ENCODE measurements at regions of chr10 and their contacts with region 1.

Region 1: DNA sequence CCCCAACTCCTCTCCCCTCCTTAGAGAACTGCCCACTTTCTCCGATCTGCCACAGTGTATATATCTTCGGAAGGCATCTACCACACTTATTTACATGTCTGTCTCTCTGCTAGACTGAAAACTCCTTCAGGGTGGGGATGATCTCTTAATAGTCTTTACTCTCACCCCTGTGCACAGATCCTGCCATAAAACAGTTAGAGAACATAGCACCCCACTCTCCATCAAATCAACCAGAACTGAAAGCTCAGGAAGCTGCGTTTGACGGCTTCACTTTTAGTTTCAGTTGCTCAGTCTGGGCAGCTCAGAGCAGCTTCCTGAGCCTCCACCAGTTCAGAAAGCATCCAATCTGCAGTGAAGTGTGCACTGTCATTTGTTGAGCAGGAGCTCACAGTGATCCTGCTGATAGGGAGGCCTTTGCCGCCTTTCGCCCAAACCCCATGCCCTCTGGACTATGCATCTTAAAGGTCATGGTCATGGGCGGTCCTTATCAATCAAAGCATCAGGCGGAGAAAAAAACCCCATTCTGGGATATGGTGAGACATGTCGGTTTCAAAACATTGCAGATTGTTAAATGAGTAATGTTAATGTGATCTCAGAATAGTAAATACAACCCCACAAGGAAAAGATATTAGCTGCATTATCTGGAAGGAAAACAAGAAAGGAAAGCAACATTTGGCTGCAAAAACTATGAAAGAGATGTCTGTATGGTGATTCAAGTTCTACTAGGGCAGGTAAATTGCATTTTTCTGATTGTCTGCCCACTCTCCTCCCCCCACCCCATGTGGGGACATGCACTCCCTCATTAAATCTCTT is 167.1 kb upstream of the ADO start:
- DNase-seq: peak; percentile 57 to 87
- ATAC-seq: peak; percentile 71 to 89 (median 79)
- H3K4me3 ChIP-seq: peak overlapping the region; percentile 24
- H3K4me3 Mint-ChIP-seq: no peak overlapping the region
- H3K27ac ChIP-seq: peak overlapping the region; percentile 94
- H3K27ac Mint-ChIP-seq: no peak overlapping the region
- H3K4me1 ChIP-seq: peaks cover 56% of the 10 kb centered on the region
- H3K4me1 Mint-ChIP-seq: peaks cover 11 to 12% of the 10 kb centered on the region in 2 donors
- H3K27me3 ChIP-seq: no peaks in the 10 kb centered on the region
- H3K27me3 Mint-ChIP-seq: no peaks in the 10 kb centered on the region
- CTCF ChIP-seq: no peak

Region 2: DNA sequence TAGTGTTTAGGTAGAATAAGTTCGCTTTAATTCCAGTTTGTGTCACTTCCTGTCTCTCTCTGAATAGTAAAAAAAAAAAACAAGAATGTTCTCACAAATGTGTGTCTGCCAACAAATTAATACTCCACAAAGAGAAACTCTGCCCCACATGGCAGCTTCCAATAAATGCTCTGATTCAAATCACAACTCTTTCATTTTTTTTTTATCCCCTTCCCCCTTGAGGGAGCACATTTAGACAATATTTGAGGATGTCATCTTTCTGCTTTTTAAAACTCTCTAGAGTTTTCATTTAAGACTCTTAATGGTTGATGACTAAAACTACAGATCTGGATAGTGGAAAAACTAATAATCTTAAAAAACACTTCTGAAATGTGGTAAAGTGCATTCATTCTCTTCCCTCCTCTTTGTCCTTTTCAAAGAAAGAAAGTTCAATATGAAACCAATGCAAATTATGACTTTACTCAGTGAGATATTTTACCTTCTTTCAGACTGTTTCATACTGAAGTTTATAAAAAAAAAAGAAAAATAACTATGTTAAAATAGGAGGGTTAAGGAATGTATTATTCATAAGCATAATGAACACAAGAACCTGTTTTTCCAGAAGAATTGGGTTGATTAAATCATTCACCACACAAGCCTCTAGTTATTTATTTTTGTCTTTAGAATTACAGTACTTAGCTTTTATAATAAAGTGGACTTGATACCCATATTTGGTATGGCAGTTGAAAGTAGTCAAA is 693.6 kb before region 1 on chr10:
- intact Hi-C with region 1: loop called (anchors 5 kb)
- DNase-seq: peak in 1 of 2 donors; percentile 68
- ATAC-seq: peak; percentile 47 to 66 (median 57)
- H3K4me3 ChIP-seq: peak overlapping the region; percentile 30
- H3K4me3 Mint-ChIP-seq: peak overlapping the region; percentile 86
- H3K27ac ChIP-seq: peak overlapping the region; percentile 93
- H3K27ac Mint-ChIP-seq: peak overlapping the region; percentile 93 to 95
- H3K4me1 ChIP-seq: peaks cover 11% of the 10 kb centered on the region
- H3K4me1 Mint-ChIP-seq: peaks cover 48 to 53% of the 10 kb centered on the region in 2 donors
- H3K27me3 ChIP-seq: no peaks in the 10 kb centered on the region
- H3K27me3 Mint-ChIP-seq: no peaks in the 10 kb centered on the region
- CTCF ChIP-seq: peak; percentile 22

Region 3: DNA sequence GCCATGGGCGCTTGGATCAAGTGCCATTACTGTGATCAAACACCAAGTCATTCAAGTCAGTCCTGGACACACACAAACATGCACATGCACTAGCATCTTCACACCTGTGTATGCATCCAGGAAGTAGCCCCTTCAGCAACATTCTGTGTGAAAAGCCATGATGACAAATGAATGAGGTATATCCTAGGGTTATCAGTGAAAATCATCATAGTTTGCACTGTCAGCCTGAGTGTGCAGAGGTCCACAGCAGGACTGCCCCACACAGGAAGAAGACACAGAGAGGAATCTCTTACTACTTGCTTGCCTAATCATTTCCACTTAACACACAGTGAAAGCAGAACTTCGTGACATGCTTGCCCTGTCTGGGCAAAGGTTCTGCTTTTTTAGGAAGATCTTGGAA is 17.0 kb before region 1 on chr10:
- intact Hi-C with region 1: loop called (anchors 2 kb)
- DNase-seq: no peak
- ATAC-seq: peak; percentile 84 to 90 (median 86)
- H3K4me3 ChIP-seq: no peak overlapping the region
- H3K4me3 Mint-ChIP-seq: peak overlapping the region; percentile 52
- H3K27ac ChIP-seq: peak overlapping the region; percentile 18
- H3K27ac Mint-ChIP-seq: peak overlapping the region; percentile 58 to 79
- H3K4me1 ChIP-seq: peaks cover 31% of the 10 kb centered on the region
- H3K4me1 Mint-ChIP-seq: peaks cover 25 to 38% of the 10 kb centered on the region in 2 donors
- H3K27me3 ChIP-seq: no peaks in the 10 kb centered on the region
- H3K27me3 Mint-ChIP-seq: peaks cover 0 to 2% of the 10 kb centered on the region in 2 donors
- CTCF ChIP-seq: no peak

Region 4: GRCh38 chr10:62707810-62708209 is 70.4 kb after region 1 on chr10:
- intact Hi-C with region 1: no loop called
- DNase-seq: no peak
- ATAC-seq: no peak
- H3K4me3 ChIP-seq: no peak overlapping the region
- H3K4me3 Mint-ChIP-seq: no peak overlapping the region
- H3K27ac ChIP-seq: no peak overlapping the region
- H3K27ac Mint-ChIP-seq: no peak overlapping the region
- H3K4me1 ChIP-seq: no peaks in the 10 kb centered on the region
- H3K4me1 Mint-ChIP-seq: peaks cover 5 to 6% of the 10 kb centered on the region in 2 donors
- H3K27me3 ChIP-seq: no peaks in the 10 kb centered on the region
- H3K27me3 Mint-ChIP-seq: peaks cover 0 to 6% of the 10 kb centered on the region in 2 donors
- CTCF ChIP-seq: no peak

Region 5: GRCh38 chr10:62858364-62858763 is 220.9 kb after region 1 on chr10:
- intact Hi-C with region 1: loop called (anchors 5 kb)
- DNase-seq: no peak
- ATAC-seq: no peak
- H3K4me3 ChIP-seq: no peak overlapping the region
- H3K4me3 Mint-ChIP-seq: no peak overlapping the region
- H3K27ac ChIP-seq: no peak overlapping the region
- H3K27ac Mint-ChIP-seq: no peak overlapping the region
- H3K4me1 ChIP-seq: peaks cover 26% of the 10 kb centered on the region
- H3K4me1 Mint-ChIP-seq: peaks cover 47 to 48% of the 10 kb centered on the region in 2 donors
- H3K27me3 ChIP-seq: no peaks in the 10 kb centered on the region
- H3K27me3 Mint-ChIP-seq: peaks cover 0 to 8% of the 10 kb centered on the region in 2 donors
- CTCF ChIP-seq: no peak

Region 6: GRCh38 chr10:63083904-63084689 is 446.6 kb after region 1 on chr10:
- intact Hi-C with region 1: no loop called
- DNase-seq: peak; percentile 20 to 76
- ATAC-seq: peak; percentile 76 to 87 (median 77)
- H3K4me3 ChIP-seq: no peak overlapping the region
- H3K4me3 Mint-ChIP-seq: no peak overlapping the region
- H3K27ac ChIP-seq: no peak overlapping the region
- H3K27ac Mint-ChIP-seq: no peak overlapping the region
- H3K4me1 ChIP-seq: no peaks in the 10 kb centered on the region
- H3K4me1 Mint-ChIP-seq: no peaks in the 10 kb centered on the region
- H3K27me3 ChIP-seq: no peaks in the 10 kb centered on the region
- H3K27me3 Mint-ChIP-seq: peaks cover 14 to 32% of the 10 kb centered on the region in 2 donors
- CTCF ChIP-seq: peak; percentile 75

Region 7: DNA sequence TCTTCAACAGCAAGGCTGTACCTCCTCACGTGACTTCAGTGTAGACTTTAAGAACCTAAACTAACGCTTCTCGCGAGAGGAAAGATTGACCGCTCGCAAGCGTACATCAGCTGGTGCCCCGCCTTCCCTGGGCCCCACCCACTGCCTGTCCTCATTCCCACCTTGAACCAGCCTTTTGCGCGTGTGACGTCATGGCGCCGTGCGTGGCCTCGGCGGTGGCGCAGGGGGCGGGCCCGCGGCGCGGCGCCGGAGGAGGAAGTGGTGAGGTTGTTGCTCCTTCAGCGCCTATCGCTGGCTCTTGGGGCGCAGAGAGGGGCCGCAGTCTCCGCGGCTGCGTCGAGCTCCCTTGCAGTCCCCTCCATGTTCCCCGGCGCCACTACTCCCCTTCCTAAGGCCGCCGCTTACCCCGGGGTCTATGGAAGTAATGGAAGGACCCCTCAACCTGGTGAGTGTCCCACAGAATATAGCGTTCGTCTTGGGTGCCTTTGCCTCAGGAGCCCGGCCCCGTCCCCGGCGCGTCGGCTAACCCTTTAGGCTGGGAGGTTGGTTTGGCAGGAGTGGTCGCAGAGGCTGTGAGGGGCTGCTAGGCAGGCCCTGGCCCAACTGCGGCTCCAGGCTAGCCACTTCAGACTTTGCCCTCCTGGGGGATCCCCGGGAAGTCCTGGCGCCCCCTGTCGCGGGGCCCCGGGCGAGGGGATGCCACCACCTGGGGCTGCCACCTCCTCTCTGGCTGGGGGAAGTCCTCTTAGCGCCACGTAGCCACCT is 495.8 kb after region 1 on chr10 and contains the start of gene NRBF2:
- intact Hi-C with region 1: loop called (anchors 5 kb)
- DNase-seq: peak; percentile 97 to 99
- ATAC-seq: peak; percentile 84 to 96 (median 86)
- H3K4me3 ChIP-seq: peak within 1 kb of the TSS; percentile 93
- H3K4me3 Mint-ChIP-seq: peak within 1 kb of the TSS; percentile 92
- H3K27ac ChIP-seq: peak within 1 kb of the TSS; percentile 98
- H3K27ac Mint-ChIP-seq: peak within 1 kb of the TSS; percentile 92 to 94
- H3K4me1 ChIP-seq: peaks cover 13% of the 10 kb centered on the region
- H3K4me1 Mint-ChIP-seq: peaks cover 30 to 42% of the 10 kb centered on the region in 2 donors
- H3K27me3 ChIP-seq: no peaks in the 10 kb centered on the region
- H3K27me3 Mint-ChIP-seq: peaks cover 8 to 17% of the 10 kb centered on the region in 2 donors
- CTCF ChIP-seq: peak; percentile 16
- total RNA-seq, gene NRBF2: 17.7 to 21.3 (median 18.2) TPM